ENCODE measurements at regions of chr20 and their contacts with region 1.

Region 1: GRCh38 chr20:13292201-13292885 is 71.3 kb downstream of the ISM1 start:
- DNase-seq: no peak
- ATAC-seq: no peak
- H3K4me3 ChIP-seq: no peak overlapping the region
- H3K27ac ChIP-seq: no peak overlapping the region
- H3K4me1 ChIP-seq: no peaks in the 10 kb centered on the region
- H3K27me3 ChIP-seq: no peaks in the 10 kb centered on the region; the same call in 1 of the 2 replicates
- CTCF ChIP-seq: no peak
- POLR2A ChIP-seq: no peak
- RAD21 ChIP-seq: no peak

Region 2: DNA sequence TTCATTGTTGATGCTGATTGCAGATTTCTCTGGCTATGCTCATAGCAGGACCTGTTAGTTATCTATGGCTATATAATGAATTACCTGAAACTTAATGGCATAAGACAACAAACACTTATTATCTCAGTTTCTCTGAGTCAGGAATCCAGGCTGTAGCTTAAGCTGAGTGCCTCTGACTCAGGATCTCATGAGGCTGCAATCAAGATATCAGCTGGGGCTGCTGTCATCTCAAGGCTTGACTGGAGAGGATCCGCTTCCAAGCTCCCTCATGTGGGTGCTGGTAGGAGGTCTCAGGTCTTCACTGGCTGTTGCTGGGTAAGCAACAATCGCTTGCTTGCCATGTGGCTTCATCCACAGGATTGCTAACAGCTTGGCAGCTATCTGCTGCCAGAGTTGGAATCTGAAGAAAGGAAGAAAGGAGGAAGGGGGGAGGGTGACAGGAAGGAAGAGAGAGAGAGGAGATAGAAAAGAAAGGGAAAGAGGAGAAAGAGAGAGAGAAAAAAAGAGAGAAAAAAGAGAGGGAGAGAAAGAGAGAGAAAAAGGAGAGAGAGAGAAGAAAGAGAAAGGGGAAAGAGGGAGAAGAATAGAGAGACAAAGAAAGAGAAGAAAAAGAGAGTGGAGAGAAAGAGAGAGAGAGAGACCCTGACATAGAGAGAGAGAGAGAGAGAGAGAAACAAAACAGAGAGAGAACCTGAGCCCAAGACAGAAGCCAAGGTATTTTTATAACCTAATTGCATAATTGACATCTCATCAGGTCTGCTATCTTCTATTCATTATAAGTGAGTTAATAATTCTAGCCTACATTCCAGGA is 1953.6 kb before region 1 on chr20:
- CTCF ChIA-PET with region 1: interaction called, 10 read pairs
- POLR2A ChIA-PET with region 1: no interaction called
- dilution Hi-C with region 1: no loop called
- in situ Hi-C with region 1: no loop called
- intact Hi-C with region 1: no loop called
- DNase-seq: peak; percentile 74
- ATAC-seq: no peak
- H3K4me3 ChIP-seq: no peak overlapping the region
- H3K27ac ChIP-seq: no peak overlapping the region
- H3K4me1 ChIP-seq: 0 out of 2 replicates have a peak, but pooled peaks cover 2% of the 10 kb centered on the region
- H3K27me3 ChIP-seq: peaks cover 4% of the 10 kb centered on the region; the same call in 1 of the 2 replicates
- CTCF ChIP-seq: no peak
- POLR2A ChIP-seq: no peak
- RAD21 ChIP-seq: no peak

Region 3: DNA sequence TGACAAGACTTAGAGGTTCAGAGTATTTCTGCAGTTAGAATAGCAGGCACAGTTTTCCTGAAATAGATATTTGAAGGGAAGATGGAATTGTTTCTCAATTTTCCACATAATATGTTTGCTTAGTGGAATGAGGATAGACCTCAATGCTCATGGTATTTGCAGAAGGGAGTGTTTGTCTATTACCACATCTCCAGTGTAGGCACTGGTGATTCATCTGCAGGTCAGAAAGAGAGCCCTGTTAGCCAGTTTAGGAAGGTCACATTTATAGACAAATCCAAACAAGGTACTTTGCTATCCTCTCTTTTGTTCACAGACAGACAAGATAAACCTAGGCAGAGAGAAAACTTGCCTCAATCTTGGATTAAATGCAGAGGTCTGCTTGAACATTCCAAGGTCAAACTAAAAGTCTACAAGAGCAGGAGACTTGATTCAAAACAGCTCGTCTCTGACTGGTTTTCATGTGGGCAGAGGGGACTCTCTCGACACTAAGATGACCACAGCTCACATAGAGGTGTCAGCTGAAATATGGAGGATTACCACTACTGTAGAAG is 48.4 kb before region 1 on chr20:
- CTCF ChIA-PET with region 1: no interaction called
- POLR2A ChIA-PET with region 1: no interaction called
- dilution Hi-C with region 1: no loop called
- in situ Hi-C with region 1: no loop called
- intact Hi-C with region 1: no loop called
- DNase-seq: no peak
- ATAC-seq: no peak
- H3K4me3 ChIP-seq: no peak overlapping the region
- H3K27ac ChIP-seq: no peak overlapping the region
- H3K4me1 ChIP-seq: no peaks in the 10 kb centered on the region
- H3K27me3 ChIP-seq: no peaks in the 10 kb centered on the region; the same call in 1 of the 2 replicates
- CTCF ChIP-seq: no peak
- POLR2A ChIP-seq: no peak
- RAD21 ChIP-seq: no peak

Region 4: DNA sequence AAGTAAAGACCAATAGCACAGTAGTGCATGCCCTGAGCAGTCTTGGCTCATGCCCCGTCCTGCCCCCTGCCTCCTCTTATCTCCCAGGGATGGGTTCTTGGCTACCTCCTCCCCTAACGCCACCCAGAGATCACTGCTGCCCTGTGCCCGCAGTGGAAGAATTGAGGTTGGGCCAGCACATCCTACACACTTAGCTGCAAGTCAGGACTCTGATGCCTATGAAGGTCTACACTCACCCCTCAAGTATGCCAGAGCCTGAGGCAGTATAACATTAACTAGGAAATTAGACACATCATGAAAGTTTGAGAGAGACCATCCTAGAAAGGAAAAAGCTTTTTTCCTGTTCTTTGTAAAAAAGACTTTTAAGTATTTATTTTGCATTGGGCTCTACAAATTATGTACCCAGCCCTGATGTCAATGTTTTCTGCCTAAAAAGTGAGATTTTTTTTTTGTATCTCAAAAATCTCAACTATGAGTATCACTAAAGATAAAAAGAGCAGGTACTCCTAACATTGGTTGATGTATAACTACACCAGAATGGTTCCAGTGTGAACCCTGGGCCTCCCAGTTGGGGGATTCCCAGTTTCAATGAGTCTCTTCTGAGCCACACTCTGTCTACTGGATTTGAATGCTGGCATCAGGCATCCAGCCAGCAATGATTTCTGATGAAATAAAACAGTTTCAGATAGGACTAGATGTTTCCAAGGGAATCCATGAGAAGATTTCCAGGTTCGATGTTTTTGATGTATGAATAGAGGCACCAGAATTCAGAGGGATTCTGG is 44.2 kb after region 1 on chr20:
- CTCF ChIA-PET with region 1: no interaction called
- POLR2A ChIA-PET with region 1: no interaction called
- dilution Hi-C with region 1: no loop called
- in situ Hi-C with region 1: no loop called
- intact Hi-C with region 1: no loop called
- DNase-seq: peak; percentile 13
- ATAC-seq: peak; percentile 65; the same call in 1 of the 2 replicates
- H3K4me3 ChIP-seq: no peak overlapping the region
- H3K27ac ChIP-seq: no peak overlapping the region
- H3K4me1 ChIP-seq: peaks cover 2% of the 10 kb centered on the region; the same call in 1 of the 2 replicates
- H3K27me3 ChIP-seq: peaks cover 3% of the 10 kb centered on the region
- CTCF ChIP-seq: no peak
- POLR2A ChIP-seq: no peak
- RAD21 ChIP-seq: no peak